ENCODE measurements at regions of chr11 and their contacts with region 1.

Region 1: DNA sequence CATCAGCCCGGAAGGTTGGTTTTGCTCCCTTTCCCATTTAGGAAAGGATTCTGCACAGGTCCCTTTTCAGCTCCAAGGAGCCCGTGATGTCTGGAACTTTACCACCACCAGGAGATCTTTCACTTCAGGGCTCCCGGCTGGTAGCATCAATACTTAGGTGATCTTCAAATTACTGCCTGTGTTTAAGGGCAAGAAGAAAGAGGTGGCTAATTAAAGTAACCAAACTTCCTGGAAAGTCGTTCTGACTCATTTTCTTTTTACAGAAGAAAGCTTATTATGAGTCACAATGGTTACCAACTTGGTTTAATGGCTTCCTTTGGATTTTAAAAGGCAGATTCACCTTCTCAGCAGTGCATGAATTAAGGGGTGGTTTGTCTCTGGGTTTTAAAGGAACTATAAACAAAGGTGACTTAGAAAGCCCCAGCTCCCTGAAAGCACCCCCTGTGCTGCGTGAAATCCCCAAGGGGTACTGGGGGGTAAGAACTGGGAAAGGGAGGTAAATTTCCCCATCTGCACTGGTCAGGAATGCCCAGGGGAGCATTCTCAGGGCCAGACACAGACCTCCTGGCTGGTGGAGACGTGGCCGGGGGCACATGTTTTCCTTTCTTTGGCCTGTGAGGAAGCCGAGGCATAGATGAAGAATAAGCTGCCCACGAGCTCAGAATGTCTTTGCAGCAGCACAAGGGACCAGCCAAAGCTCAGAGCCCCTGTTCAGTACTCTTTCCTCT is 8.8 kb downstream of the POU2F3 start:
- DNase-seq: peak; percentile 25
- H3K4me3 Mint-ChIP-seq: peak overlapping the region; percentile 69
- H3K27ac Mint-ChIP-seq: peak overlapping the region; percentile 84
- H3K4me1 Mint-ChIP-seq: peaks cover 65% of the 10 kb centered on the region
- H3K27me3 Mint-ChIP-seq: peaks cover 48% of the 10 kb centered on the region

Region 2: DNA sequence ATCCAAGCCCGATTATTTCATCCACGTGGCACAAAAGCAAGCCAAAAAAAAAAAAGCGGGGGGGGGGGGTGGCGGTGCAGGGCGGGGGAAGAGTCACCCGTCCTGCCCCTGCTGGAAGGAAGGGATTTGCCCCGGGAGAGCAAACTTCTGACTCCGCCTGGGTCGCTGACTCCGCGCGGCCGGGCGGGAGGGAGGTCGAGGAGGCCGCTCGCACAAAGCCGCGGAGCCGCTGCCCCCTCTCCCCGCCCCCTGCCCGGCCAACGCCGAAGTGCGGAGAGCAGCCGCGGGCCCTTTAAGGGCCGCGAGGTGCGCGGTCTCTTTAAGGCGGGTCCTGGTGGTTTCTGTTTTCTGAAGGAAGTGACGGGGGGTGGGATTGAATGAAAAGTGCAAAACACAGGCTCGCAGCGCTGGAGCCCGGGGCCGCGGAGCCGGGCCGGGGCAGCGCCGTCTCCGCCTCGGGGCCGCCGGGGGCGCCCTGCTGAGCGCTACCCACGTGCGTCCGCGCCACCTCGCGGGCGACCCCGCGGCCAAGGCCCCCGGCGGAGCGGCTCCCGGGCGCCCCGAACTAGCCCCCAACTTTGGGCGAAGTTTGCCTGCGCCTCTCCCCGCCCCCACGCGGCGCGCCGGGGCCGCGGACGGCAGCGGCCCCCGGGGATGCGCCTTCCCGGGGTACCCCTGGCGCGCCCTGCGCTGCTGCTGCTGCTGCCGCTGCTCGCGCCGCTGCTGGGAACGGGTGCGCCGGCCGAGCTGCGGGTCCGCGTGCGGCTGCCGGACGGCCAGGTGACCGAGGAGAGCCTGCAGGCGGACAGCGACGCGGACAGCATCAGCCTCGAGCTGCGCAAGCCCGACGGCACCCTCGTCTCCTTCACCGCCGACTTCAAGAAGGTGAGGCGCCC is 37.8 kb before region 1 on chr11 and contains the start of gene OAF:
- intact Hi-C with region 1: loop called (anchors 1 kb)
- DNase-seq: peak; percentile 67
- H3K4me3 Mint-ChIP-seq: peak within 1 kb of the TSS; percentile 92
- H3K27ac Mint-ChIP-seq: peak within 1 kb of the TSS; percentile 76
- H3K4me1 Mint-ChIP-seq: peaks cover 13% of the 10 kb centered on the region
- H3K27me3 Mint-ChIP-seq: peaks cover 54% of the 10 kb centered on the region
- total RNA-seq, gene OAF: 6.7 and 7.3 TPM in 2 replicates

Region 3: GRCh38 chr11:120235024-120235861 is 13.5 kb before region 1 on chr11:
- intact Hi-C with region 1: loop called (anchors 1 kb)
- DNase-seq: peak; percentile 49
- H3K4me3 Mint-ChIP-seq: no peak overlapping the region
- H3K27ac Mint-ChIP-seq: no peak overlapping the region
- H3K4me1 Mint-ChIP-seq: peaks cover 19% of the 10 kb centered on the region
- H3K27me3 Mint-ChIP-seq: peaks cover 55% of the 10 kb centered on the region

Region 4: DNA sequence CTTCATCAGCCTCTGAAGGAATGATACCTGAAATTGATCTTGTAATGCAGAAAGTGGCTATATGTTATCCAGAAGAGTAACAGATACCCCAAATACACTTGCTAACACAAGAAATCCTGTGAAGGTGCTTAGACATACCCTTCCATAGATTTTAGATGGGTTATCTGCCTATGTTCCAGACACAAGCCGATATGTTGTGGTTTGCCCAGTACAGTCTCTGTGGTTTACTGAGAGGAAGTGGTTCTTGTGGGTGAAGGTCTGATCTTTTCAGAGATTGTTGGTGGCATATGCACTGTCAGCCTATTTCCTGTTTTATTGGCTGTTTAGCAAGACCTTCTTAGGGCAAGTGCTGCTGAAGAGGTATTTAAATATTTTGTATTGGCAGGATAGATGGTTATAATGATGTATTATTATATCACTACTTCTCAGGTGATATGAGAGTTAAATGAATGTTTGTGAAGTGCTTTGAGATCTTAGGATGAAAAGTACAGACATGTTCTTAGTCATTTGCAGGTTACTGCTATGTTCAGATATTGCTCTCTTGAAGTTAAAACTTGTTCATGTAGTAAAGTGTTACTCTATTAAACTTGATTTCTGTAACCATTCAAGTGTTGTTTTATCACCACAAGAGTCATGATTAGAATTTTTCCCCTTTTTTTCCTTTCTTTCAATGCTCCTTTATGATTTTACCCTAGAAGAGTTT is 95.7 kb after region 1 on chr11:
- intact Hi-C with region 1: loop called (anchors 1 kb)
- DNase-seq: peak; percentile 71
- H3K4me3 Mint-ChIP-seq: peak overlapping the region; percentile 74
- H3K27ac Mint-ChIP-seq: peak overlapping the region; percentile 81
- H3K4me1 Mint-ChIP-seq: peaks cover 51% of the 10 kb centered on the region
- H3K27me3 Mint-ChIP-seq: peaks cover 60% of the 10 kb centered on the region

Measured in activated T-helper 1 cell treated with anti-CD3 and anti-CD28 coated beads, Interleukin-12 subunit alpha, Interleukin-12 subunit beta, Interleukin-2, Interleukin-4 antibody, amounts not matched to agents 30 ng/mL and 10 ng/mL and 1 ng/mL, durations not matched to agents 14 hours and 24 hours and 36 hours (primary cell).